Activated T-helper 2 cell treated with anti-CD3 and anti-CD28 coated beads, Interferon-gamma antibody, Interleukin-2, Interleukin-4, amounts not matched to agents 10 μg/mL and 5 μg/mL and 100 μg/mL, durations not matched to agents 14 hours and 24 hours and 36 hours (primary cell): ENCODE measurements at regions of chr12 and their contacts with region 1.

Region 1: DNA sequence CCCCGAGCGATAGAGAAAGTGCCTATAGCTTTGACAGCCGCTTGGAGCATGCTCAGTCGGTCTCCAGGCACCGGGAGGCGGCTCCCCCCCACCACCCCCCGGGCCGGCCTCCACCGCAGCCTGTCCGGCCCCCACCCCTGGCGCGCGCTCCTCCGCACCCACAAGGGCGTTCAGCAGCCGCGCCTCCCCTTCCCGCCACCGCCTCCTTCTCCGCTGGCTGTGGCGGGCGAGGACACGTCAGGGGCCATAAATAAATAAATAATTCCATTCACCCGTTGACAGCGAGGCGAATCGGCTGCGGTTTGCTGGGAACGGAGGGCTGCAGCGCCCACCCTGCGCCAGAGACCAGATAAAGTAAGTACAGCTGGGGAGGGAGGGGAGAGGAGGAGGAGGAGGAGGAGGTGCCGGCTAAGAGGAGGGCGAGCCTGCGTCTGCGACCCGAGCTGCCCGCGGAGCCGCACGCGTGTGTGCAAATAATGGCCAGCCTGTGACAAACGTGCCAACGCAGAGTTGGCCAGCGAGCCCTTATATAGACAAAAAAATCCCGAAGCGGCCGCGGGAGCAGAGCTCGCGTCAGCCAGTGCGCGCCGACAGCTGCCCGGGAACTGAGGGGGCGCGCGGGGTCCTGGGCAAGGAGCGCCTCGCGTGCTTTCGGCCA is at the start of gene SLC16A7:
- DNase-seq: peak; percentile 80
- H3K4me3 Mint-ChIP-seq: peak within 1 kb of the TSS; percentile 88
- H3K27ac Mint-ChIP-seq: peak within 1 kb of the TSS; percentile 99
- H3K4me1 Mint-ChIP-seq: peaks cover 41% of the 10 kb centered on the region
- H3K27me3 Mint-ChIP-seq: no peaks in the 10 kb centered on the region
- total RNA-seq, gene SLC16A7: 29.1 and 33.6 TPM in 2 replicates

Region 2: GRCh38 chr12:57941165-57941894 is 1654.7 kb before region 1 on chr12 and contains the start of gene ATP23:
- intact Hi-C with region 1: loop called (anchors 2 kb)
- DNase-seq: peak; percentile 90
- H3K4me3 Mint-ChIP-seq: peak within 1 kb of the TSS; percentile 89
- H3K27ac Mint-ChIP-seq: peak within 1 kb of the TSS; percentile 97
- H3K4me1 Mint-ChIP-seq: peaks cover 40% of the 10 kb centered on the region
- H3K27me3 Mint-ChIP-seq: no peaks in the 10 kb centered on the region
- total RNA-seq, gene ATP23: 10.8 and 12.7 TPM in 2 replicates

Region 3: DNA sequence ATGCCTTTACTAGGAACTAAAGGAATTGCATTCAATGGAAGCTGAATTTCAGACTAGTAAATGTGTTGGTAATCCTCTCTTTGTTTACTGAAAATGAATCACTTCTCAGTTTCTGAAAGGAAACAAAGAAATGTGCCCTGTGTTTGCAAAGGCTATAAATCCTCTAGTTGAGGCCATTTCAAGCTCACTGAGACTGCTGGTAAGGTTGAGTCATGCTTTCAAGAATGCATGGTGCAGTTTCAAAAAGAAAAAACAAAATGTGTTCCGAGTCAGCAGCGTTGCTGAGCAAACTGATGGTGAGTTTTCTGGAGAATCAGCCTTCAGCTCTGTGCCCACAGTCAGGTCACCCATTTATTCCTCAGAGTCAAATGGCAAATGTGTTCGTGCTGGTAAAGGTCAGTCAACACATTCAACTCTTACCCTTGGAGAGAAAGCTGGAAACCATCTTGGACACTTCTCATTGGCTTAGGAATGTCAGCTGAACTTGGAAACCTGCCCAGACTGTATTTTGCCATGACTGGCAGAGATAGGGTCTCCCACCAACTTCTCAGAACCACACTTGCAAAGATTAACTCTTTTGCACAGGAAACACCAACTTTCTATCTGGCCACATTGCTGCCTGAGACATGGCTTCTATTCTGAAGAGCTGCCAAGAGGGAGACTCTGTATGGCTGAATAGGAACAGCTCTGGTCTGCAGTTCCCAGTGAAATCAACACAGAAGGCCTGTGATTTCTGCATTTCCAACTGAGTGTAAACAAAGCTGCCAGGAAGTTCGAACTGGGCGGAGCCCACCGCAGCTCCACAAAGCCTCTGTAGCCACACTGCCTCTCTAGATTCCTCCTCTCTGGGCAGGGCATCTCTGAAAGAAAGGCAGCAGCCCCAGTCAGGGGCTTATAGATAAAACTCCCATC is 1170.3 kb before region 1 on chr12:
- intact Hi-C with region 1: loop called (anchors 2 kb)
- DNase-seq: peak; percentile 11
- H3K4me3 Mint-ChIP-seq: peak overlapping the region; percentile 9
- H3K27ac Mint-ChIP-seq: peak overlapping the region; percentile 87
- H3K4me1 Mint-ChIP-seq: peaks cover 39% of the 10 kb centered on the region
- H3K27me3 Mint-ChIP-seq: peaks cover 32% of the 10 kb centered on the region

Region 4: GRCh38 chr12:59408431-59408830 is 187.6 kb before region 1 on chr12:
- intact Hi-C with region 1: loop called (anchors 1 kb)
- DNase-seq: no peak
- H3K4me3 Mint-ChIP-seq: no peak overlapping the region
- H3K27ac Mint-ChIP-seq: no peak overlapping the region
- H3K4me1 Mint-ChIP-seq: peaks cover 19% of the 10 kb centered on the region
- H3K27me3 Mint-ChIP-seq: peaks cover 4% of the 10 kb centered on the region

Region 5: GRCh38 chr12:59580050-59580449 is 16.0 kb before region 1 on chr12:
- intact Hi-C with region 1: loop called (anchors 1 kb)
- DNase-seq: no peak
- H3K4me3 Mint-ChIP-seq: no peak overlapping the region
- H3K27ac Mint-ChIP-seq: no peak overlapping the region
- H3K4me1 Mint-ChIP-seq: peaks cover 47% of the 10 kb centered on the region
- H3K27me3 Mint-ChIP-seq: peaks cover 3% of the 10 kb centered on the region

Region 6: DNA sequence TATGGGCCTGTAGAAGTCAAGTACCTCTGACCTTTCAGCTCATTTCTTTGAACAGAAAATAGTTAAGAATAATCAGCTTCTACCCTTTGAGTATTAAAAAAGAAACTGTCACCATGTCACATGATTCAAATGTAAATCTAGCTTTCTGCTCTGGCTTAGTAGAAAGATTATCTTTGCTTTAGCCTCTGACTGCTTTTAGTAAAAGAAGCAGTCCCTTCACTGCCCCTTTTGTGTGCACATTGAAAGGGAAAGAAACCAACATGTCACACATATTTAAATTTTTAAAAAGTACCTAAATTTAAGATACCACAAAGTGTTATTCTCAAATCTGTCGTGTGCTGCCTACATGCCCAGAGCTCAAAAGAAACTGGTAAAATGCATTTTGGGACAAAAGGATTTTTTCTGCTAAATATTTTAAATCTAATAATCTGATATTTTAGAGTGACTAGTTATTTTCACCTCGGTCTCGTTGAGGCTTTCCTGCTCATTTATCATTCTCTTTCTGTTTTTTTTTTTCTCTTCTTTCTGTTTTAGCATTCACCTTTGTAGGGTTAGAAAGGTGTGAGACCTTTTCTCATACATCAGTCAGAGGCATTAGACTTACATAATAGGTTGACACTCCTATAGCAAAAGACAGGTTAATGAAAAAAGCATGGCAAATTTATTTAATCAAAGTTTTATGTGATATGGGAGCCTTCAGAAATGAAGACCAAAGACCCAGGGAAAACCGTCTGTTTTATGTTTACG is 41.1 kb after region 1 on chr12:
- intact Hi-C with region 1: loop called (anchors 5 kb)
- DNase-seq: no peak
- H3K4me3 Mint-ChIP-seq: no peak overlapping the region
- H3K27ac Mint-ChIP-seq: no peak overlapping the region
- H3K4me1 Mint-ChIP-seq: peaks cover 12% of the 10 kb centered on the region
- H3K27me3 Mint-ChIP-seq: no peaks in the 10 kb centered on the region

Region 7: DNA sequence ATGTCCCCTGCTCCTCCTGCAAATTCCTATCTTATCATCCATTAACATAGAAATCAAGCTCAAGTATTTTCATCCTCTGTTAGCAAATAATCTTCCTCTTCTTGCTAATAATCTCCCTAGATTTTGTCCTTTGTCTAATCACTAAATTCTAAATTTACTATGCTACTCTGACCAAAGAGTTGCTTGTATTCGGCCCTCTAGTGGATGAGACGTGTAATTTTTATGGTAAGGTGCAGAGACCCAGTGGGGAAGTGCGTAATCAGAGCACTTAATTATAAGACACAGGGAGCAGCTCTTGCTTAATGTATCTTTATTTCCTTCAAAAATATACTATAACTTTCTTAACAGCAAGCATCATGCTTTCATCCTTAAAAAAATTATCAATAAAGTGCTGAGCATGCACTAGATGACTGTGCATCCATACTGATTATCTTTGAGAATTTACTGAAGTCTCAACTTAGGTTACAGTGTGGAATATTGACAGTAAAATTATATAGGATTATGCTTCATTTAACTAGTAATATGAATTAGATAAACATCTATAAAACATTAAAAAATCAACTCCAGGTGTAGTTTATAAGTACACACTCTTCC is 212.4 kb after region 1 on chr12:
- intact Hi-C with region 1: loop called (anchors 1 kb)
- DNase-seq: no peak
- H3K4me3 Mint-ChIP-seq: no peak overlapping the region
- H3K27ac Mint-ChIP-seq: no peak overlapping the region
- H3K4me1 Mint-ChIP-seq: no peaks in the 10 kb centered on the region
- H3K27me3 Mint-ChIP-seq: peaks cover 4% of the 10 kb centered on the region